ENCODE measurements at regions of chr14 and their contacts with region 1.

Region 1: GRCh38 chr14:39762576-39763401 is 330.6 kb upstream of the FBXO33 start:
- DNase-seq: no peak
- ATAC-seq: no peak
- H3K4me3 ChIP-seq: no peak overlapping the region
- H3K27ac ChIP-seq: no peak overlapping the region
- H3K4me1 ChIP-seq: no peaks in the 10 kb centered on the region
- H3K27me3 ChIP-seq: no peaks in the 10 kb centered on the region
- CTCF ChIP-seq: no peak

Region 2: DNA sequence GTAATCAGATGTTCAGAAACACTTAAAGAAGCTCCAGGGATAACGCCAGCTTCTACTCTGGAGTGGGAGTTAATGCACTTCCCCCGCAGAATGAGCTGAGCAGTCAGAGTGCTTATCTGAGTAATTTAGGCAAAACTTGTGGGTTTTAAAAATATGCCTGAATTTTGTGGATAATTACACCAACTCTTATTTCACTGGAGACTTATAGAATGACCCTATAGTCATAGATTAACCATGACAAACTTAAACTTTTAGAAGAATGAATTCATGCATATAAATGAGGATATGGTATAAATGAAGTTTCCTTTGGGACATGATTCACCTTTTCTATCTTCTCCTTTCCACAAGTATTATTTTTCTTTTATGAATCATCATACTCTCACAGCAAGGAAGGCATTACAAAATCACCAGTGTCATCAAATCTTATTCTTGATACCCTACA is 89.5 kb before region 1 on chr14:
- CTCF ChIA-PET with region 1: no interaction called
- POLR2A ChIA-PET with region 1: no interaction called
- in situ Hi-C with region 1: no loop called
- intact Hi-C with region 1: no loop called
- DNase-seq: no peak
- ATAC-seq: no peak
- H3K4me3 ChIP-seq: no peak overlapping the region
- H3K27ac ChIP-seq: no peak overlapping the region
- H3K4me1 ChIP-seq: no peaks in the 10 kb centered on the region
- H3K27me3 ChIP-seq: no peaks in the 10 kb centered on the region
- CTCF ChIP-seq: no peak

Region 3: DNA sequence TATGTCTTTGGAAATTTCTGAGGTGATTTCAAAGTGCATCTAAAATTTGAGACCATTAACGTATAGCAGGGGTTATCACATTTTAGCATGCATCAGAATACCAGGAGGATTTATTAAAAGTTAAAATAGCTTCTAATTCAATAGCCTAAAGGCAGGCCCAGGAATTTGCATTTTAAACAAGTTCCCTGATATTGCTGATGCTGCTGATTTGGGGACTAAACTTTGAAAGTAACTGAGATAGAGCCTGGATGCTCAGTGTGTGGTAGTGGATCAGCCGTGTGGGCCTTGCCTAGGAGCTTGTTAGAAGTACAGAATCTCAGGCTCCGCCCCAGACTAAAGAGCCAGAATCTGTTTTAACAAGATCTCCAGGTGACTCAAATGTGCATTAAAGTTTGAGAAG is 44.5 kb after region 1 on chr14:
- CTCF ChIA-PET with region 1: no interaction called
- POLR2A ChIA-PET with region 1: no interaction called
- in situ Hi-C with region 1: no loop called
- intact Hi-C with region 1: no loop called
- DNase-seq: no peak
- ATAC-seq: no peak
- H3K4me3 ChIP-seq: no peak overlapping the region
- H3K27ac ChIP-seq: no peak overlapping the region
- H3K4me1 ChIP-seq: no peaks in the 10 kb centered on the region
- H3K27me3 ChIP-seq: no peaks in the 10 kb centered on the region
- CTCF ChIP-seq: no peak

Region 4: DNA sequence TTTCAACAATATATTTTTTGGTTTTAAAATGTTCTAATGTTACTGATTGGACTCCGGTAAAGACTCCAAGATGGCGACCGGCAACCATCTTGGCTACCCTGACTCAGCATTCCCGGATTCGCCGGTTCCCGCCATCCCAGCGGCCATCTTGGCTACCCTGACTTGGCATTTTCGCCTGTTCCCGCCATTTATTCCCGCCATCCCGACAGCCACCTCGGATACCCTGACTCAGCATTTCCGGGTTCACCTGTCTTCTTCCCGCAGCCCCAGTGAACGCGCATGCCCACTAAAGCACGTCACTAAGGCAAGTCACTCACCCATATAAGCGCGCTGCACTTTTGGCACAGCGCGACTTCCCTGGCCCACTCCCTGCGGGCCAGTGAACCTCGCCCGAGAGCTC is 1834.9 kb after region 1 on chr14:
- CTCF ChIA-PET with region 1: no interaction called
- POLR2A ChIA-PET with region 1: interaction called, 10 read pairs
- in situ Hi-C with region 1: no loop called
- intact Hi-C with region 1: no loop called
- DNase-seq: no peak
- ATAC-seq: no peak
- H3K4me3 ChIP-seq: no peak overlapping the region
- H3K27ac ChIP-seq: no peak overlapping the region
- H3K4me1 ChIP-seq: peaks cover 5% of the 10 kb centered on the region
- H3K27me3 ChIP-seq: no peaks in the 10 kb centered on the region
- CTCF ChIP-seq: no peak